Activated CD8-positive, alpha-beta T cell treated with anti-CD3 and anti-CD28 coated beads for 36 hours (primary cell): ENCODE measurements at regions of chr19 and their contacts with region 1.

Region 1: GRCh38 chr19:41753936-41754529 is 1.3 kb upstream of the CEACAM6 start:
- DNase-seq: peak; percentile 86
- ATAC-seq: peak; percentile 96
- H3K4me3 Mint-ChIP-seq: no peak overlapping the region
- H3K27ac Mint-ChIP-seq: no peak overlapping the region
- H3K4me1 Mint-ChIP-seq: peaks cover 3% of the 10 kb centered on the region
- H3K27me3 Mint-ChIP-seq: peaks cover 24% of the 10 kb centered on the region
- CTCF ChIP-seq: peak; percentile 72

Region 2: GRCh38 chr19:41691268-41691970 is 62.6 kb before region 1 on chr19:
- CTCF ChIA-PET with region 1: interaction called, 10 read pairs
- POLR2A ChIA-PET with region 1: no interaction called
- intact Hi-C with region 1: no loop called
- DNase-seq: peak; percentile 45
- ATAC-seq: peak; percentile 37
- H3K4me3 Mint-ChIP-seq: no peak overlapping the region
- H3K27ac Mint-ChIP-seq: no peak overlapping the region
- H3K4me1 Mint-ChIP-seq: no peaks in the 10 kb centered on the region
- H3K27me3 Mint-ChIP-seq: peaks cover 26% of the 10 kb centered on the region
- CTCF ChIP-seq: peak; percentile 64

Region 3: DNA sequence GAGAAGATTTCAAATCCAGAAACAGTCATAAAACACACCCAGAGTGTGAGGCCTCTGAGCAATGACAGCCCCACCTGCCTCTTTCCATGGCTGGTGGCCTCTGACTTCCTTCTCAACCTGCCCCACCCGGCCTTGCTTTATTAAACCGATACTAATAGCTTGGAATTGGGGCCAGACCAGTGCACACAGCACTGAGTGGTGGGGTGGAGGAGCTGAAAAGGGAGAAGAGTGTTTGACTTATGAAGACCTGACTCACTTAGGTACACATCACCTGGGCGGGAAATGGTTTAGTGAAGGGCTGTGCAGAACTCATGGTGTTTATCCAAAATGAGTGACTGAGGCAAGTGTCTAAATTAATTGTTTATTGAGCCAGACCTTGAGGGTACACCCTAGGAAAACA is 19.4 kb before region 1 on chr19:
- CTCF ChIA-PET with region 1: interaction called, 46 read pairs
- POLR2A ChIA-PET with region 1: no interaction called
- intact Hi-C with region 1: no loop called
- DNase-seq: no peak
- ATAC-seq: no peak
- H3K4me3 Mint-ChIP-seq: no peak overlapping the region
- H3K27ac Mint-ChIP-seq: no peak overlapping the region
- H3K4me1 Mint-ChIP-seq: peaks cover 7% of the 10 kb centered on the region
- H3K27me3 Mint-ChIP-seq: peaks cover 46% of the 10 kb centered on the region
- CTCF ChIP-seq: no peak

Region 4: DNA sequence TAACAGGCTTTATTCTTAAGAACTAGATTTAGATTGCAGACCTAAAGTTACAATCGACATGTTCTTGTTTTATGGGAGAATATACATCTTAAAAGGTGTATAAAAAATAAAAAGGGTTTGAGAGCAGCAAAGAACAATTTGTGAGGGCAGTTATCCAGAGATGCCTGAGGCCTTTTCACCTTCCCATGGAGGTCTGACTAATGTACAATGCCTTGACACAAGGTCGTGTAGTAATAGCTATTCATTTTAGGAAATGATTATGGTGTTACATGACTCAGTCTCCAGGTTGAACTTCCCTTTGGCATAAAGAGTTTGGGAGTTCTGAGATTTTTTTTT is 21.3 kb after region 1 on chr19:
- CTCF ChIA-PET with region 1: interaction called, 177 read pairs
- POLR2A ChIA-PET with region 1: interaction called, 3 read pairs
- intact Hi-C with region 1: no loop called
- DNase-seq: no peak
- ATAC-seq: no peak
- H3K4me3 Mint-ChIP-seq: no peak overlapping the region
- H3K27ac Mint-ChIP-seq: no peak overlapping the region
- H3K4me1 Mint-ChIP-seq: peaks cover 30% of the 10 kb centered on the region
- H3K27me3 Mint-ChIP-seq: peaks cover 66% of the 10 kb centered on the region
- CTCF ChIP-seq: no peak

Region 5: GRCh38 chr19:41795031-41795461 is 41.0 kb after region 1 on chr19:
- CTCF ChIA-PET with region 1: interaction called, 98 read pairs
- POLR2A ChIA-PET with region 1: no interaction called
- intact Hi-C with region 1: no loop called
- DNase-seq: peak; percentile 82
- ATAC-seq: peak; percentile 96
- H3K4me3 Mint-ChIP-seq: no peak overlapping the region
- H3K27ac Mint-ChIP-seq: no peak overlapping the region
- H3K4me1 Mint-ChIP-seq: no peaks in the 10 kb centered on the region
- H3K27me3 Mint-ChIP-seq: peaks cover 27% of the 10 kb centered on the region
- CTCF ChIP-seq: peak; percentile 86

Region 6: DNA sequence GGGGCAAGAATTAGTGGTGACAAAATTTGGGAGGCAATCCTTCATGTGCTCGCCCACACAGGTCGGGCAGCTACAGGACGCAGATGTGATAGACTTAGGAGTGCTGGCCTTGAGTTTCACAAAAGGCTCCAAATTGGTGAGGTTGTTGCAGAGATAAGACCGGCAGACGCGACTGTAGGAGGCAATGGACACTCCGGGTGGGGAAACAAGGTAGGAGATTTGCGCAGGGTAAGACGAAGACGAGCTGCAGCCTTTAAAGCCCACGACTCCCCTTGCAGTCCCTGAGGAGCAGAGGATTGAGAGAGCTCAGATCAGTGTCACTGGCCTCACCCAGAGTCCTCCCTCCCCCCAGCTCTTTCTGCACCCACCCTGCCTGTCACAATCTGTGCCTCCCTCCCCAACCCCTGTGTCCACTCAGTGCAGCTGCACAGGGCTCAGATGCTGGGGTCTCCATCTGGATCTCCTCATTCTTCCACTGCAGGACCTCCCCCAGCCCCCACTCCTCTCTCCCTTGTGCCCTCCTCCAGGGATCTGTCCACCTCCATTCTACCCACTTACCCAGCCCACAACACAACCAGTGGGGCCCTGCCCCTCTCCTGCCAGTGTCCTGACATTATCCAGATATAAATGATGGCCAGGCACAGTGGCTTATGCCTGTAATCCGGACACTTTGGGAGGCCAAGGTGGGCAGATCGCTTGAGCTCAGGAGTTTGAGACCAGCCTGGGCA is 84.1 kb after region 1 on chr19:
- CTCF ChIA-PET with region 1: interaction called, 15 read pairs
- POLR2A ChIA-PET with region 1: no interaction called
- intact Hi-C with region 1: no loop called
- DNase-seq: no peak
- ATAC-seq: no peak
- H3K4me3 Mint-ChIP-seq: no peak overlapping the region
- H3K27ac Mint-ChIP-seq: no peak overlapping the region
- H3K4me1 Mint-ChIP-seq: no peaks in the 10 kb centered on the region
- H3K27me3 Mint-ChIP-seq: peaks cover 20% of the 10 kb centered on the region
- CTCF ChIP-seq: no peak